MCF 10A (cell line): ENCODE measurements at regions of chrX and their contacts with region 1.

Region 1: DNA sequence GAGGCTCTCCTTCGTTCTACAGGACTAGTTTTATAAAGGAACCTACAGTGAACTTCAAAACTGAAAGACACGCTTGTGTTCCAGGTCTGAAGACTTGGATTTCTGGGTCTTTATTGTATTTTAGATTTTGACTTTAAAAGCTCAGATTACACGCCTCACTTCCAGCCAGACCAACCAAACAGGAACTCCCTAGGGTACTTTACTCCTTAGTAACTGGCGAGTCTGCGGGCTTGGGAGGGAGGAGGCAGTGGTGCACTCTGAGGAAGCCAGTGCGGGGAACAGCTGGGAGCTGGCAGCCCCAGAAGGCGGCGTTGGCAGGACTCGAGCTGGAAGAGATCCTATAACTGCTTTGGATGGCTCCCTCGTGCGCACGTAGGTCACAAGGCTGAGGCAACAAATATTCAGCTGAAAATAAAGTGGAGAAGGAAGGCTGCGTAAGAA is 390 bp upstream of the PHKA1 start:
- DNase-seq: peak; percentile 51
- H3K4me3 Mint-ChIP-seq: peak overlapping the region; percentile 72
- H3K27ac Mint-ChIP-seq: peak overlapping the region; percentile 24
- H3K4me1 Mint-ChIP-seq: peaks cover 9% of the 10 kb centered on the region
- H3K27me3 Mint-ChIP-seq: peaks cover 34% of the 10 kb centered on the region
- CTCF ChIP-seq: no peak

Region 2: DNA sequence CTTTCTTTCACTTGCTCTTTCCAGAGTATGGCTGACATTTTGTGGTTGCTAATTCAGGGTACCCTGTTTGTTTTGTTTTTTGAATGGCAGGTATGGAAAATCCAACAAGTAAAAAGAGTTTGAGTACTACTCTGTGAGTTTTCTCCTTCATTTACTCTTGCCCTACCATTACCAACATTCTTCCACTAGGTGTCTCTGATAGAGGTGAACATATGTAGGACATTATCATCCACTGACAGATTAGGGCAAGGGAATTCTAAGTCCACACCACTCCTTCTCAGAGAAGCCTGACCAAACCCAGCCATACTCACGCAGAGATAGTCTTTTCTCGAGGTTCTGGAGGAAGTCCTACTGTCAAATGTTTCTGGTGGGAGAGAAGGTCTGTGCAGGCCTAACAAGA is 105.2 kb before region 1 on chrX:
- CTCF ChIA-PET with region 1: no interaction called
- POLR2A ChIA-PET with region 1: no interaction called
- intact Hi-C with region 1: loop called (anchors 2 kb)
- DNase-seq: peak; percentile 9
- H3K4me3 Mint-ChIP-seq: no peak overlapping the region
- H3K27ac Mint-ChIP-seq: no peak overlapping the region
- H3K4me1 Mint-ChIP-seq: no peaks in the 10 kb centered on the region
- H3K27me3 Mint-ChIP-seq: peaks cover 62% of the 10 kb centered on the region
- CTCF ChIP-seq: peak; percentile 29

Region 3: DNA sequence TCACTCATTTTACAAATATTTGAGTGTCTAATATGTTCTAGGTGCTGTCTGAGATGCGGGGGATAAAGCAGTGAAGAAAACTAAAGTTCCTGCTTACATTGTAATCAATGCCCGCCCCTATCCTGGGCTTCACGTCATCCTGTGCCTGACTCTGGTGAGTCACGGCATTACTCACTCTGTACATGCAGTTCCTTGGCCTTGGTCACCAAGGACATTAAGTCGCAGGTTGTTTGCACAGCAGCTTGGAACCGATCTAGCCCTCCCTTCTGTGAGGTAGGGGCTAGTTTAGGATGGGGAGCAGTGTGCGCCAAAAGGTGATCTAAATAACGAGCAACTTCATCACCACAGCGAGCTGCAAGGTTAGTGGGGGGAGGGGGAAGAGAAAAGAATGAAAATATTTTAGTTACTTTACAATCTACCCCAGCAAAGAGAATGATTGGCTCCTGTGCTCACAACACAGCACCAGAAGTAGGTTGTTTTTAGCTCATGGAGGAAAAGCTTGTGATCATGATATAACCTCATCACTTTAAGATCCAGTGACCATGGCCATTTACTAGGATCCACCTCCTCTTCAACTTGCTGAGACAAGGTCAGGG is 93.8 kb before region 1 on chrX:
- CTCF ChIA-PET with region 1: interaction called, 3 read pairs
- POLR2A ChIA-PET with region 1: interaction called, 25 read pairs
- intact Hi-C with region 1: loop called (anchors 5 kb)
- DNase-seq: peak; percentile 86
- H3K4me3 Mint-ChIP-seq: peak overlapping the region; percentile 52
- H3K27ac Mint-ChIP-seq: peak overlapping the region; percentile 77
- H3K4me1 Mint-ChIP-seq: peaks cover 16% of the 10 kb centered on the region
- H3K27me3 Mint-ChIP-seq: peaks cover 38% of the 10 kb centered on the region
- CTCF ChIP-seq: no peak

Region 4: DNA sequence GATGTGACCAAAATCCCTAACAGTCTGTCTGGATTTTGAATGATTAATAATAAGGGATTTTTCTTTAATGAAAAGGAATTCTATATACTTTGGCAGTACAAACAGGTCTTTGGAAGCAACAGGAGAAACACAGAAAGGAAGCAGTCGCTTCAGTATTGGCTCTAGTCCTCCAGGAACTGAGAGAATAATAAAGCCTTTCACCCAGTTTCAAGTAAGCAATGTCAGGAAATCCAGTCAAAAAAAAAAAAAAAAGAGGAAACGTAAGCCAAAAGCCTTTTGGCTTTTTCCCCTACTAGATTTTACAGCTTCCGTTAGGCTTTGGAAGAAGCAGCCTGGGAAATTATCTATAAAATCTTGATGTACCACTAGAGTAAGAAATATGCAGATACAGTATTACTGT is 80.2 kb before region 1 on chrX:
- CTCF ChIA-PET with region 1: no interaction called
- POLR2A ChIA-PET with region 1: no interaction called
- intact Hi-C with region 1: no loop called
- DNase-seq: no peak
- H3K4me3 Mint-ChIP-seq: no peak overlapping the region
- H3K27ac Mint-ChIP-seq: no peak overlapping the region
- H3K4me1 Mint-ChIP-seq: no peaks in the 10 kb centered on the region
- H3K27me3 Mint-ChIP-seq: peaks cover 81% of the 10 kb centered on the region
- CTCF ChIP-seq: no peak